Ascending aorta (tissue), 2 donors: ENCODE measurements at regions of chr10 and their contacts with region 1.

Region 1: DNA sequence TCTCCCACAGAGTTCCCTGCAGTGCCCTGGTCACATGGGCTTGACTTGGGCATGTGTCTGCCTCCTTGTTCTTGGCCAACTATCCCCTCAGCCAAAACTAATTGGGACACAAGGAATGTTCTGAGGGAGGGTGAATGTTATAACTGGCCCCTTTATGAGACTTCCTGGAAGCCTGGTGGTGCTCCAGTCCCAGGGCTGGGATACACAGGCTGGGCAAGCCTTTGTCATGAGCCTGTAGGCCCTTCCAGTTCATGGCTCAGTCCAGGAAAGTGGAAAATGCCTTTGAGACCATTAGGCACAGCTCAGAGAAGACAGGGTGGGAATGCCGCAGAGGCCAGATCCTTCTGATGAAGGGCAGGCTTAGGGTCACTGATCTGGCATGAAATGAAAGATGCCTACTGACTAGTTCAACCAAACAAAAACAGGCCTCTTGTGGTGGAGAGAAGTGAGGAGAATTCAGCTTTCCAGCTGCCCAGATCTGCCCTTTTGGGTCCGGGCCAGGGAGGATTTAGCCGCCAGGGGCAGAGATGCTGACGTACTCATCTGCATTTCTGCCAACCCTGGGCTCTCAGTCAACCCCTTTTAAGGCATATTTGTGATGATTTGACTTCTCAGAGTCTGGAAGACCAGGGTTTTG is 961.5 kb downstream of the KCNMA1 start:
- DNase-seq: peak; percentile 46 to 94
- H3K4me3 ChIP-seq: no peak overlapping the region
- H3K27ac ChIP-seq: peak overlapping the region; percentile 84 to 91
- H3K4me1 ChIP-seq: peaks cover 16 to 38% of the 10 kb centered on the region in 2 donors
- H3K27me3 ChIP-seq: no peaks in the 10 kb centered on the region
- CTCF ChIP-seq: peak in 2 of 3 experiments; percentile 21 to 27

Region 2: DNA sequence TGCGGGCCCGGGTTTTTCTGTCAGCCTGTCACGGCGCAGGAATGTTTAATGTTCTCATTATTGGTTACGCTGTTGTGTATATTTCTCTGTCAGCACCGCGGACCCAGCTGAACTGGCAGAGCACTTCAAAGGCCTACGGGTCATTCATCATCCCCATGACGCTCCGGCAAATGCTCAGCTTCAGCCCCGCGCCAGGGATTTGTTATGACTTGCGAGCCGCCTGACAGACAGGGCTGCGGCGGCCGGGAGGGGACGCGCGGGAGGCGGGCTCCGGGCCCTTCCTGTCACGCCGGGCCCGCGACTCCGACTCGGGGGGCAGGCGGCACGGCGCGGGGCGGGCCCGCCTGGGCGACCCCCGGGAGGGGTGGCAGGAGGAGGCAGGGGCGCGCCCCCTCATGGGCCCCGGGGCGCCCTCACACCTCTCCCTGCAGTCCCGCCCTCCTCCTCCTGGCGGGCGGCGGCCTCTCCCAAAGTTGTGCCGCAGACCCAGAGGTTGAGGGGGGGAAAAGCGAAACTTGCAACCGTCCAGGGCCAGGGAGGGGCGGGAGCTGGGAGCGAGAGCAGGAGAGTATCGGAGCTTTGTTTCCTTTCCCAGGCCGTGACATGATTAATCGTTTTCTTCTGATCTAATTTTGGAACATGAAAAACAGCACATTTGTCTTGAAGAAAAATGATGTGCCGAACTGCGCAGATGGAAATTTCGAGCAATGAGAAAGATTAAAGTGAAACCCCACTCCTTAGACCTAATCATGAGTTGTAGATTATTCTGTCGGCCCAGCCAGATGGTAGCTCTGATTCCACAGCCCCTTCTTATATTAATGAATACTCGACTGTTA is 1381.0 kb before region 1 on chr10:
- intact Hi-C with region 1: loop called (anchors 10 kb)
- DNase-seq: peak; percentile 60 to 93
- H3K4me3 ChIP-seq: peak overlapping the region; percentile 79 to 92
- H3K27ac ChIP-seq: peak overlapping the region; percentile 91 to 94
- H3K4me1 ChIP-seq: peaks cover 11 to 23% of the 10 kb centered on the region in 2 donors
- H3K27me3 ChIP-seq: no peaks in the 10 kb centered on the region
- CTCF ChIP-seq: peak in 2 of 3 experiments; percentile 20 to 51

Region 3: GRCh38 chr10:76583711-76584161 is 92.3 kb before region 1 on chr10:
- intact Hi-C with region 1: loop called (anchors 5 kb)
- DNase-seq: peak in 1 of 2 donors; percentile 69
- H3K4me3 ChIP-seq: no peak overlapping the region
- H3K27ac ChIP-seq: peak overlapping the region in 1 of 2 donors; percentile 45
- H3K4me1 ChIP-seq: peaks cover 0 to 4% of the 10 kb centered on the region in 2 donors
- H3K27me3 ChIP-seq: no peaks in the 10 kb centered on the region
- CTCF ChIP-seq: no peak

Region 4: DNA sequence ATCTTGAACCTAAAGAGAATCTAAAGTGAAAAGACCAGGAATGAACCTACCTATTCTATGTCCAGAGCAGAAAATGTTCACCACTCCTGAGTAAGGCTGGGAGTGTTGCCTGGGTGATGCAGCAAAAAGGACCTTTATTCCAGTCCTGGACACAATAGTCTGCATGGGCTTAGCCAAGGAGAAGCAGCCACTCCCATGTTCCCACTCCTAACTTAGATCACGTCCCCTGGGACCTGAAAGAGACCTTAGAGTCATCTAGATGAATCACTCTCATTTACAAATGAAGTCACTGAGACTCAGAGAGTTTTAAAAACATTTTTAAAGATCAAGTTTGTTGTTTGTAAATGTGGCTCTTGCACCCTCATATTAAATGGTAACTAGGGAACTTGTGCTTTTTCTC is 198.1 kb after region 1 on chr10:
- intact Hi-C with region 1: loop called (anchors 5 kb)
- DNase-seq: peak; percentile 39 to 92
- H3K4me3 ChIP-seq: no peak overlapping the region
- H3K27ac ChIP-seq: peak overlapping the region; percentile 70 to 83
- H3K4me1 ChIP-seq: peaks cover 2 to 12% of the 10 kb centered on the region in 2 donors
- H3K27me3 ChIP-seq: no peaks in the 10 kb centered on the region
- CTCF ChIP-seq: no peak

Region 5: DNA sequence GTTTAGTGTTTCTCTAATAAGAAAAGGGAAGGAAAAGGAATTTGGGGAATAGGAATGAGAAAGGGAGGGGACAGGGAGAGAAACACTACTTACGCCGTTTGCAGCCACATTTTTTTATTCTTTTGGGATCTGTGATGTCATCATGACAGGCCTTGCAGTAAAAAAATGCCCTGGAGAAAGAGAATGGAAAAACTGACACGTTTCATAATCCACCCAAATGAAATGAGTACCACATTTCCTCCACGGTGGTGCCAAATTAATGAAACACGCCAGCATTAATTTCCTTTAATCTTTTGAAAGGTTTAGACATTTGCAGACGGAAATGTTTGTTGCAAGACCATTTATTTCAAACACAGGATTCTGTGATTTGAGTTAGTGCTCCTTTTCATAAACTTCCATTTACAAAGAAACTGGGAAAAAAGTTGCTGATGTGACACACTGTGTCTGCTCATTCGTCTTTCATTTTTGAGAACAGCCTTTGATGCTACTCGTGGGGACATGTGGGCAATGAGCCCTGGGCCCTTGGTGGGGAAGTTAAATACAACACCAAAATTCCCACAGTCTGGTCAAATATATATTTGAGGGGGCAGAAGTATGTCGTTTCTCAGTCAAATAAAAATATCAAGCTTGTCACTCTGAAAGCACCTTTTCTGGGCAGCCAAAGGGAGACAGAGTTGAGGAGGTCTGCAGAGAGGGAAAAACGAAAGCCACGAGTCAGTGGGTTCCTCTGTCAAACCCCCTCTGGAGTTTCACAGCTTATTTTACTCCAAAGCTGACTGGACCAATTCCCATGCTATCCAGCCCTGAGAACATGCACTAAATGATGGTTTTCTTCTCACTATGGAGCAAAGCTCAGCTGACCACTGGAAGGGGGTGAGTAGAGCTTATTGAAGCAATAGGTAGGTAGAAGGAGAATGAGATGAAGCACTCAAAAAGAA is 336.1 kb after region 1 on chr10:
- intact Hi-C with region 1: loop called (anchors 5 kb)
- DNase-seq: peak in 1 of 2 donors; percentile 73
- H3K4me3 ChIP-seq: peak overlapping the region in 1 of 2 donors; percentile 4
- H3K27ac ChIP-seq: peak overlapping the region; percentile 87 to 94
- H3K4me1 ChIP-seq: peaks cover 14 to 38% of the 10 kb centered on the region in 2 donors
- H3K27me3 ChIP-seq: no peaks in the 10 kb centered on the region
- CTCF ChIP-seq: no peak